Posterior cingulate gyrus (tissue), 11 donors: ENCODE measurements at regions of chr7 and their contacts with region 1.

Region 1: DNA sequence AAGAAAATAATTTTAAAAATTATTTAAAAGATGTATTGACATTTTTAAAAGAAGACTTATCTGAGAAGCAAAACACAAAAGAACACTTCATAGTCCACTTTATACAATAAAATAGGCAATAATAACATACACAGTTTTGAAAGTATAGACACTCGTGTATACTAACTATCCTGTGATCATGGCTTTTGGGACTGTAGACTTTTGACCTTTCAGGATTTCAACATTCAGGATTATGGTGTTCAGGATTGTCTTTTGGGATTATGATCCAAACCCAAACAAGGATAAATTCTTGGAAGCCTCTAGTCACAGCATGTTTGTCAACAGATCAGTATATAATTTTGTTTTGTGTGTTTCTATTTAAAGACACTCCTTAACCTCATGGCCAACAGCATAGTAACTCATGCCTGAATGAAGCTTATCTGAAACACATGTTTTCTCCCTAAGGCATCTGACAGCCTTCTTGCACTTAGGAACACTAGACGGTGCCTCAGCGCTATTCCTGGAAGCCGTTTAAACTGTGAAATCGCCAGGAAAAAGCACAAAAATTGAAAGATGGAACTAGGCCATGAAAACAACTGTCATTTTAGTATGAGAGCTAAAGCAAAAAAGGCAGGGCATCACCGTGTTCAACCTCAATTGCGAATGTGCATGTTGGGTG is 29.9 kb downstream of the GSAP start:
- DNase-seq: no peak

Region 2: DNA sequence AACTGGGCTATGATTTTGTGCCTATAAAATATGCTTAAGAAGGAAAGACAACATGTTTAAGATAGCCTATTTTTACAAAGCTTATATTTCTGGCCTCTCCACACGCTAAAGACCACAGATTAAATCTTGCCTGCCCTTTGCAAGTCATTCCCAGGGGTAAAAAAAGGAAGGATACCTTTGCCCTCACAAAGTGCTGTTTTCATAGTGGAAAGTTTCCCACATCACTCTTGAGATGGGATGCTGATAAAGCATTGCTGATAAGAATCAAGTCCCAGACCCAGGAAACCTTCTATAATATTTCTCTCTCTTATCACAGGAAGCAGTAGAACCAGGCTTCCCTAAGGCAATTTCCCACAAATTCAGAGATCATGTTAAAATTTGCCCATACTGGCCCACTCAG is 26.7 kb before region 1 on chr7:
- intact Hi-C with region 1: loop called (anchors 1 kb)
- DNase-seq: no peak

Region 3: GRCh38 chr7:77481615-77482402 is 95.5 kb after region 1 on chr7:
- intact Hi-C with region 1: no loop called
- DNase-seq: no peak